ENCODE measurements at regions of chr2 and their contacts with region 1.

Region 1: DNA sequence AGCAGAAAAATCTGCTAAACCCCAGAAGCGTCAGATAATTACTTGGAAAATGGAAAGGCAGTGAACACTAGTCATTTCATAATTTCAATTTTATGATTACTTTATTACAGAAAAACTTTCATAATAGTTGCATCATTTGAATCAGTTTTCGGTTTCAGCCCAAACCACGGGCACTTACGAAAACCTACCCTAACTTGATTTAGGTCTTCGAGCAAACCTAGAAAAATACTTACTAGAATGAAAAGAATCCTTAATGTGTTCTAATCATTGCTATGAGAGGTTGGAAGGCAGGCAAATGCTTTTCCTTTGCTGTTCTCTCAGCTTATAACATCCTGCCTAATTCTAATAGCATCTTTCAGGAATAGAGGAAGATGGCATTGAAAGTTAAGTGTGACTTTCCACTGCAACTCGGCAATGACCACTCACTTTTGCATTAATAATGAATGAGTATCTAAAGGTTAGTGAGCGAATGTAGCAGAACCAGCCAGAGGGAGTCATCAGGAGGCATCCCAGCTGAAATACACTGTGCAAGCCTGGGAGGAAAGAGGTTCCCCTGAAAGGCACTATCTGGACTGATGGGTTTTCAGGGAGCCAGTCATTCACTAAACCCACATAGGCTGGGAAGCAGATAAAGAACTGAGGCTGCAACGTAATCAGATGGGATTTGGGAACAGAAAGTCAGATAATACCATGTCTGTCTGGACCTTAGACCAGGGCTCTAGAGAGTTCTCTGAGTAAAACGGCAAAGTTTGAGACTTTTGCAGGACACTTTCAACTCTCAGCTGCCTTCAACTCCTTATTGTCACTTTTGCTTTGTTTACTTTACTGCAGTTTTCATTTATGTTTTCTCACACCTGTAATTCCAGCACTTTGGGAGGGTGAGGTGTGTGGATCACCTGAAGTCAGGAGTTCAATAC is 520.8 kb downstream of the RNF144A start:
- DNase-seq: peak; percentile 69
- H3K4me3 Mint-ChIP-seq: no peak overlapping the region
- H3K27ac Mint-ChIP-seq: peak overlapping the region; percentile 87
- H3K4me1 Mint-ChIP-seq: peaks cover 68% of the 10 kb centered on the region
- H3K27me3 Mint-ChIP-seq: no peaks in the 10 kb centered on the region

Region 2: DNA sequence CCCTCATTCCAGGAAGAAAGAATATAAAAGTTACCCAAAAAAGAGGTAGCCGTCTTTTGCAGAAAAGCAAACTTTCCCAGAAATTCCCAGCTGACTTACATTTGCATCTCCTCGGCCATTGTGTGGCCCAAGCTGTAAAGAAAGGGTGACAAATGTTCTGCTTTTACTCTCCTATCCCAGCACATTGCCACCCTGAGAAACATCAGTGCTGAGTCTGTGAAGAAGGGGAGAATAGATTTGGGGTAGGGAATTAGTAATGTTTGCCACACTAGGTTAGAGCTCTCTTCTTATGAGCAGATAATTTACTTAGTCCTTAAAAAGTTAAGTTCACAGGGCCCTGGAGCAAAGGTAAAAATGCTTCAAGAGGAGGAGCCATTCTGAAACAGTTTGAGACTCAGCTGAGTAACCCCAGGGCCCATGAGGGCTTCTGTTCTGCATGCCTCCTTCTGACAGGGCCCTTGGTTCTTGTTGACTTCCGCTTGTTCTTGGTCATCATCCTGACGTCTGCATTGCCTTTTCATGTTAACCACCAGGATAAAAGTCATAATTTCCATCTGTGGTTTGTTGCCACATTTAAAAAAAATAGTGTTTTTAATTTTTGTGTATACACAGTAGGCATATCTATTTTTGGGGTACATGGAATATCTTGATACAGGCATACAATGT is 29.9 kb after region 1 on chr2:
- CTCF ChIA-PET with region 1: no interaction called
- intact Hi-C with region 1: loop called (anchors 1 kb)
- DNase-seq: peak; percentile 68
- H3K4me3 Mint-ChIP-seq: no peak overlapping the region
- H3K27ac Mint-ChIP-seq: peak overlapping the region; percentile 83
- H3K4me1 Mint-ChIP-seq: peaks cover 45% of the 10 kb centered on the region
- H3K27me3 Mint-ChIP-seq: no peaks in the 10 kb centered on the region

Region 3: GRCh38 chr2:7517088-7517487 is 79.1 kb after region 1 on chr2:
- CTCF ChIA-PET with region 1: no interaction called
- intact Hi-C with region 1: loop called (anchors 2 kb)
- DNase-seq: peak; percentile 61
- H3K4me3 Mint-ChIP-seq: peak overlapping the region; percentile 31
- H3K27ac Mint-ChIP-seq: peak overlapping the region; percentile 77
- H3K4me1 Mint-ChIP-seq: peaks cover 37% of the 10 kb centered on the region
- H3K27me3 Mint-ChIP-seq: no peaks in the 10 kb centered on the region

Region 4: DNA sequence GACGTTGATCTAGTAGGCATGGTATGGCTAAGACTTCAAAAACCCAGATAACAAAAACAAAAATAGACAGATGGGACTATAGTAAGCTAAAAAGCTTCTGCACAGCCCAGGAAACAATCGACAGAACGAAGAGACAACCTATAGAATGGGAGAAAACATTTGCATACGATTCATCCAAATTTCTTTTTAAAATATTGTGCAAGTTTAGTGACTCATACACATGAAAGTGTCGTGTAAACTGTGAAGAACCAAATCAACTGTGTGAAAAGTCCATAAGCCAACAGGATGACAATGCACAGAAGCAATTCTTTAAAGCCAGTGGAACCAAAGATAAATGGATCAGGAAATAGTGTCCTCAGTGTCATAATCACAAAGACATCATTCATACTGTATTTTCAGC is 150.3 kb after region 1 on chr2:
- CTCF ChIA-PET with region 1: no interaction called
- intact Hi-C with region 1: loop called (anchors 1 kb)
- DNase-seq: no peak
- H3K4me3 Mint-ChIP-seq: no peak overlapping the region
- H3K27ac Mint-ChIP-seq: peak overlapping the region; percentile 6
- H3K4me1 Mint-ChIP-seq: peaks cover 27% of the 10 kb centered on the region
- H3K27me3 Mint-ChIP-seq: no peaks in the 10 kb centered on the region

Region 5: GRCh38 chr2:7845332-7845731 is 407.4 kb after region 1 on chr2:
- CTCF ChIA-PET with region 1: no interaction called
- intact Hi-C with region 1: loop called (anchors 2 kb)
- DNase-seq: no peak
- H3K4me3 Mint-ChIP-seq: no peak overlapping the region
- H3K27ac Mint-ChIP-seq: no peak overlapping the region
- H3K4me1 Mint-ChIP-seq: peaks cover 19% of the 10 kb centered on the region
- H3K27me3 Mint-ChIP-seq: peaks cover 5% of the 10 kb centered on the region

Region 6: GRCh38 chr2:7984693-7985353 is 546.8 kb after region 1 on chr2:
- CTCF ChIA-PET with region 1: no interaction called
- intact Hi-C with region 1: loop called (anchors 2 kb)
- DNase-seq: peak; percentile 22
- H3K4me3 Mint-ChIP-seq: peak overlapping the region; percentile 8
- H3K27ac Mint-ChIP-seq: peak overlapping the region; percentile 62
- H3K4me1 Mint-ChIP-seq: peaks cover 20% of the 10 kb centered on the region
- H3K27me3 Mint-ChIP-seq: peaks cover 4% of the 10 kb centered on the region